ENCODE measurements at regions of chr18 and their contacts with region 1.

Region 1: GRCh38 chr18:57561728-57562423 is 24.6 kb downstream of the FECH start:
- DNase-seq: no peak
- ATAC-seq: peak; percentile 45
- H3K4me3 Mint-ChIP-seq: no peak overlapping the region
- H3K27ac Mint-ChIP-seq: no peak overlapping the region
- H3K4me1 Mint-ChIP-seq: peaks cover 4% of the 10 kb centered on the region
- H3K27me3 Mint-ChIP-seq: no peaks in the 10 kb centered on the region
- CTCF ChIP-seq: peak; percentile 86

Region 2: DNA sequence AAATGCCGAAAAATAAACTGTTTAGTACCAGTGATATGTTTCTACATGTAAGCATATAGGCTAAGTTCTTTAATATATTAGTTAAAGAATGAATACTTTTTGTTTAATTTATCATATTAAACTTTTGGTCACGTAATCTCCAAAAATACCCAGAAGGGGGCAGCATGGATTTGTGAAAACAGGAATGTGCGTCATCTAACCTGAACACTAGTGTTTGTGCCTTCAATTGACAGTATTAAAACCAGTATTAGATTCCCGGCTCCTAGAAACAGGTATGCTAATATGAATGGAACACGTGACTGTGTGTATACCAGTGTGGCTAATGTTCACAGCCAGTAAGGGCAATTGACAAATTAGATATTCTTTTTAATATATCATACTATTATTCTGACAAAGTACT is 858.9 kb before region 1 on chr18:
- CTCF ChIA-PET with region 1: interaction called, 30 read pairs
- POLR2A ChIA-PET with region 1: no interaction called
- intact Hi-C with region 1: loop called (anchors 1 kb)
- DNase-seq: no peak
- ATAC-seq: no peak
- H3K4me3 Mint-ChIP-seq: no peak overlapping the region
- H3K27ac Mint-ChIP-seq: no peak overlapping the region
- H3K4me1 Mint-ChIP-seq: peaks cover 2% of the 10 kb centered on the region
- H3K27me3 Mint-ChIP-seq: no peaks in the 10 kb centered on the region
- CTCF ChIP-seq: no peak

Region 3: DNA sequence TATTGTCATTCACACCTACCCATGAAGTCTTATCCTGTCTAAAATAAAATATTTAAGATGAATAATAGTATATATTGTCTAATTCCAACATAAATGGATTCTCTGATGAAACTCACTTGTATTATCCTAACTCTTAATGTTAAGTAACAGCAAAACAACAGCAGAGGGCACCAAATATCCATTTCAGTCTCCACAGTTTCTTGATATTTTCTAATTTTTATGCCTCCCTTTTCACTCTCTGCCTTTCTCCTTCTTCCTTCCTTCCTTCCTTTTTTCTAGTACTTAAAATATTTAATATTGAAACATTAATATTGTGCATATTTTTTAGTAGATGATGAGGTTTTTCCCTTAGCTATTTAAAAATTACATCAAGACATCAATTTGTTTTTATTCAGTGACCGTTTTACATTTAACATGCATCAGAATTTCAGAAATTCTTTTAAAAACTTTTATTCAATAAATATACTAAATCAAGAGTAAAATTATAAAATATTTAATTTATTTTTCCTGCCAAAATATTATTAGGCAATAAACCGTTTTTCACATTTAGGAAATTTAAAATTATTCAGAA is 813.1 kb before region 1 on chr18:
- CTCF ChIA-PET with region 1: interaction called, 48 read pairs
- POLR2A ChIA-PET with region 1: no interaction called
- intact Hi-C with region 1: loop called (anchors 1 kb)
- DNase-seq: no peak
- ATAC-seq: no peak
- H3K4me3 Mint-ChIP-seq: no peak overlapping the region
- H3K27ac Mint-ChIP-seq: no peak overlapping the region
- H3K4me1 Mint-ChIP-seq: peaks cover 20% of the 10 kb centered on the region
- H3K27me3 Mint-ChIP-seq: no peaks in the 10 kb centered on the region
- CTCF ChIP-seq: no peak

Region 4: GRCh38 chr18:56789004-56789888 is 772.6 kb before region 1 on chr18:
- CTCF ChIA-PET with region 1: interaction called, 13 read pairs
- POLR2A ChIA-PET with region 1: no interaction called
- intact Hi-C with region 1: loop called (anchors 1 kb)
- DNase-seq: no peak
- ATAC-seq: no peak
- H3K4me3 Mint-ChIP-seq: no peak overlapping the region
- H3K27ac Mint-ChIP-seq: no peak overlapping the region
- H3K4me1 Mint-ChIP-seq: no peaks in the 10 kb centered on the region
- H3K27me3 Mint-ChIP-seq: no peaks in the 10 kb centered on the region
- CTCF ChIP-seq: peak; percentile 19

Region 5: GRCh38 chr18:56869189-56869777 is 692.6 kb before region 1 on chr18:
- CTCF ChIA-PET with region 1: interaction called, 15 read pairs
- POLR2A ChIA-PET with region 1: no interaction called
- intact Hi-C with region 1: loop called (anchors 1 kb)
- DNase-seq: no peak
- ATAC-seq: no peak
- H3K4me3 Mint-ChIP-seq: no peak overlapping the region
- H3K27ac Mint-ChIP-seq: no peak overlapping the region
- H3K4me1 Mint-ChIP-seq: no peaks in the 10 kb centered on the region
- H3K27me3 Mint-ChIP-seq: no peaks in the 10 kb centered on the region
- CTCF ChIP-seq: peak; percentile 38

Region 6: GRCh38 chr18:57446322-57446721 is 115.6 kb before region 1 on chr18:
- CTCF ChIA-PET with region 1: no interaction called
- POLR2A ChIA-PET with region 1: no interaction called
- intact Hi-C with region 1: loop called (anchors 5 kb)
- DNase-seq: no peak
- ATAC-seq: no peak
- H3K4me3 Mint-ChIP-seq: no peak overlapping the region
- H3K27ac Mint-ChIP-seq: no peak overlapping the region
- H3K4me1 Mint-ChIP-seq: peaks cover 5% of the 10 kb centered on the region
- H3K27me3 Mint-ChIP-seq: peaks cover 62% of the 10 kb centered on the region
- CTCF ChIP-seq: no peak

Region 7: GRCh38 chr18:57603871-57604270 is 42.0 kb after region 1 on chr18:
- CTCF ChIA-PET with region 1: no interaction called
- POLR2A ChIA-PET with region 1: no interaction called
- intact Hi-C with region 1: no loop called
- DNase-seq: no peak
- ATAC-seq: no peak
- H3K4me3 Mint-ChIP-seq: no peak overlapping the region
- H3K27ac Mint-ChIP-seq: no peak overlapping the region
- H3K4me1 Mint-ChIP-seq: no peaks in the 10 kb centered on the region
- H3K27me3 Mint-ChIP-seq: no peaks in the 10 kb centered on the region
- CTCF ChIP-seq: no peak

Measured in activated B cell treated with CpG ODN at 0.5 μM for 24 hours (primary cell).